HAP-1 (cell line): ENCODE measurements at regions of chr10 and their contacts with region 1.

Region 1: DNA sequence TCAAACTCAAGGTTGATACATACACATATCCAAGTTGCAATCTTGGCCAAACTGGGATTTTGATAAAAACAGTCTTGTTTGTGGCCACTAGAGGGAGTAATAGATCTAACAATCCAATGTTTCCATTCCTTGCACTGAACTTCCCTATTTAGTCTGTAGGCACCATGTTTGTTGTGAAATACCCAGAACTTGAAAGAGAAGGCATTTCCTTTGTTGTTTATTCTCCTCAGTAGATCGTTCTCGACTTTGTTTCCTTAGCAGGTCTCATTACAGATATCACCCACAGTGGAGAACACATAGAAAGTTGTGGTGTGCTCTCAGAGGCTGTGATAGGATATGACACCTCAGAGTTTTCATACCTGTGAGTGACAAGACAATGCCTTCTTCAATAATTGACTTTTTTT is 70.3 kb upstream of the MXI1 start:
- DNase-seq: peak in 1 of 2 experiments; percentile 77
- H3K4me3 ChIP-seq: no peak overlapping the region
- H3K4me1 ChIP-seq: no peaks in the 10 kb centered on the region
- H3K27me3 ChIP-seq: no peaks in the 10 kb centered on the region

Region 2: DNA sequence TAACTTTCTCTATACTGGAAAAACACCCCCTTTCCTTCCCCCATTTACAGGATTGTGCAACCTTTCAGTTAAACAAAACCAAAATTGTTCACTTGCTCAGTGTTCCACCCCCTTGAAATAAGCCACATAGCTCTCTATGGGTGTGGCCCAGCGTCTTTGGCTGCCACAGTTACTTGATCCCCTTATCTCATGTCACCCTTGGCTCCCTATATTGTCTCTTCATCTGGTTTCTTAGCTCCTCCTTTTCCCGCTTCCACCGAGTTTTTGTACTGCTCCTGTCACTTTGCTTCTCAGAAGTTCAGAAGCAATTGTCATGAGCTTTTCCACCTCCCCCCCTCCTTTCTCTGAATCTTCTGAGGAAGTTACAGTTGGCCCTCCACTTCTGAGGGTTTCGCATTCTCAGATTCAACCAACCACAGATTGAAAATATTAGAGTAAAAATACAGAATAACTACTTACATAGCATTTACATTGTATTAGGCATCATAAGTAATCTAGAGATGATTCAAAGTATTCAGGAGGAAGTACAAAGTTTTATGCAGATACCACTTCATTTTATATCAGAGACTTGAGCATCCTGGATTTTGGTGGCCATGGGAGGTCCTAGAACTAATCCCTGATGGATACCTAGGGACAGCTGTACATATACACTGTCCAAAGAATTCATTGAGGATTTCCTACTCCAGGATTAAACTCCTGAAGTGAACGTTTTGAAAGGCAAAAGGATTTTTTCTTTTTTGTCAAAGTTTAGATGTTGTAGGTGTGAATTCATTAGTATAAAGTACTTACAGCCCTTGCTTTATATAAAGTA is 69.0 kb before region 1 on chr10:
- in situ Hi-C with region 1: no loop called
- DNase-seq: peak; percentile 37 to 46
- H3K4me3 ChIP-seq: no peak overlapping the region
- H3K4me1 ChIP-seq: peaks cover 28% of the 10 kb centered on the region
- H3K27me3 ChIP-seq: no peaks in the 10 kb centered on the region

Region 3: GRCh38 chr10:110284262-110284661 is 147.1 kb after region 1 on chr10:
- in situ Hi-C with region 1: loop called (anchors 5 kb)
- DNase-seq: no peak
- H3K4me3 ChIP-seq: no peak overlapping the region
- H3K4me1 ChIP-seq: peaks cover 3% of the 10 kb centered on the region
- H3K27me3 ChIP-seq: no peaks in the 10 kb centered on the region

Region 4: DNA sequence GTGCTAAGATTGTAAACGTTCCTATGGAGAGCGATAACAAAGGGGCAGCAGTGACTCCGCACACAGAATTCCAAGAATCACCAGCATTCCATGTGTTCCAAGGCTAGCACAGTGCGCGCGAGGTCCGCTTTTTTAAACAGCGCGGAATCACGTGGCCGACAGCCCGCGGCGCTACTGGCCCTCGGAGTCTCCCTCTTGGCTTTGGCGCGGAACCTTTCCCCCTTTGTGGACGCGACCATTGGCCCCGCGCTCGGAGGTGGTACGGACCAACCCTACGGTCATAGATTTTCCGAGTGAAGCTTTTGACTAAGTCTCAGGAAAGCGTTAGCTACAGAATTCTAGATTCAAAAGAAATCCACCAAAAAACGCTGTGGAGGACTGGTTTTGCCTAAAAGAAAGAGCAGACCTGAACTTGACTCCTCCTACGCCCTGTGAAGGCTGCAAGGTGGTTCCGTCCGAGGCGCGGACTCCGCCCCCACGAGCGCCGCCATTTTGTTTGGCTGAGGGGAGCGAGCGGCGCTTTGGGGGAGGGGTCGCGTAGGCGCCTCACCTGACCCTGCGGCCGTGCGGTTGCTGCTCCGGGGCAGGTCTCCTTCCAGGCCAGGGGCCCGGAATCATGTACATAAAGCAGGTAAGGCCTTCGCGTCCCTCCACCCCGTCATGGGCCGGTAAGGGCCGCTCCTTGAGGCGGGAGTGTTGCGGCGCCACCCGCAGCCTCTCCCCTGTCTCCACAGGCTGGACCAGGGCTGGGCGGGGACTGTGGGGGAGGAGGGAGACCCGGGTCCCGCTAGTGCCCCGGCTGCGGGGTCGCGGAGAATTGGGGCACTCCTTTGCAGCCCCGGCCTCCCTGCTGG is 430.3 kb after region 1 on chr10 and contains the start of gene SMC3:
- in situ Hi-C with region 1: loop called (anchors 25 kb)
- DNase-seq: peak; percentile 92 to 96
- H3K4me3 ChIP-seq: peak within 1 kb of the TSS; percentile 98
- H3K4me1 ChIP-seq: peaks cover 26% of the 10 kb centered on the region
- H3K27me3 ChIP-seq: peaks cover 7% of the 10 kb centered on the region

Region 5: DNA sequence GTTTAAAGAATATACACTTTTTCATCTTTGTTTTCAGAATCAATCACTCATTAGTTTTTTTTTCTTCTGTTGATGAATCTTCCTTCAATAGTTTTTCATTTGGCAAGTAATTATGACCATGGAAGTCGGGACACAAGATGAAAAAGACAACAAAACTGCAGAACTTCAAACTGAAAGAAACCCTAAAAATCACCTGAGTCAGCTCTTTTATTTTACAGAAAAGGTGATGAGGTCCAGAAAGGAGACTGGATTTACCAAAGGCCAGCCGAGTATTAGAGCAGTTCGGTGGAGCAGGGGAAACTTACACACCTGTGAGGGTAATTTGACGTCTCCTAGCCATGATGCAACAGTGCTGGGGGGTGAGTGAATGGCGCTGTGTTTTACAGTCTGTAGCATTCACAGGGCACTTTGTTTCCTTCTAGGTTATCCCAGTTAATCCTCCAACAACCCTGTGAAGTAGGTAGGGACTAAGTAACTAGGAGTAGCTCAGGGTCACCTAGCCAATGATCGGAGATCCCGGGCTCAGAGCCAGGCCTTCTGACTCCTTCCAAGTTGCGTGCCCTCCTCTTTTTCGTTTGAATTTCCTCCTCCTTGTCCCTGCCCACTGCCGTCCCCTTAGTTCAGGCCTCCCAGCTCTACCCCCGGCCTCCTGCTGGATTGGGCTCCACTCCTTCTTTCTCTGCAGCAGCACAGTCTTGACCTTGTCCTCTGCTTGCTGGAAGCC is 521.0 kb after region 1 on chr10:
- in situ Hi-C with region 1: no loop called
- DNase-seq: no peak
- H3K4me3 ChIP-seq: no peak overlapping the region
- H3K4me1 ChIP-seq: peaks cover 9% of the 10 kb centered on the region
- H3K27me3 ChIP-seq: no peaks in the 10 kb centered on the region; the same call in 1 of the 2 replicates

Region 6: DNA sequence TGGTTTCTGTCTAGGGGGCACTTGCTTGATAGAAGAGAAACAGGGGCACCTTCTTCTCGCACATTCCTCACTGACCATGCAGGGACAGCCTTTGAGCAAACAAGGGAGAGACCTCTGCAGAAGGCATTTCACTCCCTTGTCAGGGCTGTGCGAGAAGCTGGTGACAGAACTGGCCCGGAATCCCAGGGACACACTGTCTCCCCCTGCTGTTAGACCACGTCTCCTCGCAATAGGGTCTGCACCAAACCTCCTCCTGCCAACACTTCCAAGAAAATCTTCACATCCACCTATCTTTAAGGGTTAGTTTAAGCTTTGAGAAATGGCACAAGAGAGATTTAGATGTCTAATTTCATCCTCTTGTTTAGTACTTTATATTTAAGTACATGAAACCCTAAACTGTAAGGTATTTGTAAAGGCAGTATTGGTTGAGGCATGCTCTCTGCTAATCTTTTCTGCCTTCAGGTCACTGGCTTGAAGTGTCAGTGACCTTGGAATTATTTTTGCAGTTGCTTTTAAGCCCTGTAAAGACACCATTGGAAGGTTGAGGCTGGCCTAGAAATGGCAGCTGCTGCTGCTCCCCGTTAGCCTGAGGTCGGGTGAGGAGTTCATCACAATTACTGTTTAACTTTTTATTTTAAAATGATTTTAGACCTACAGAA is 544.0 kb after region 1 on chr10:
- in situ Hi-C with region 1: no loop called
- DNase-seq: peak; percentile 44 to 76
- H3K4me3 ChIP-seq: no peak overlapping the region
- H3K4me1 ChIP-seq: peaks cover 5% of the 10 kb centered on the region; the same call in 1 of the 2 replicates
- H3K27me3 ChIP-seq: no peaks in the 10 kb centered on the region